ENCODE measurements at regions of chr3 and their contacts with region 1.

Region 1: GRCh38 chr3:27368831-27369607 is at the start of gene NEK10:
- DNase-seq: peak; percentile 91
- total RNA-seq, gene NEK10: 0.51 and 2.9 TPM in 2 replicates

Region 2: DNA sequence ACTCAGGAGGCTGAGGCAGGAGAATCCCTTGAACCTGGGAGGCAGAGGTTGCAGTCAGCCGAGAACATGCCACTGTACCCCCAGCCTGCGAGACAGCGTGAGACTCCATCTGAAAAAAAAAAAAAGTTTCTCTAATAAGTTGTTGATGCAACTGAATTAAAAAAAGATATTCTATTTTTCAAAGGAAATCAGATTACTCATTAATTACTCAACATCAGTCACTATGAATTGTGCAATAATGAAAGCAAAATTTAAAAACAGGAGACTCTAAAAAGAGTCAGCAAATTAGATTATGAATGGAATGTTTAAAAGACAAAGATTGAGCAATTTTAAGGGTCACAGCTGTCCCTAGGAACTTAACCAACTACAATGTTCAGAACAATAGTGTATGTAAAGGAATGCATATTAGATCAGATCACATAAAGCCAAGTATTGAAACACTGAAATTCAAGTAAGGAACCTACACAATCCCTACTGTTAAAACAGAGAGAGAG is 175.4 kb after region 1 on chr3:
- in situ Hi-C with region 1: no loop called
- DNase-seq: no peak

Region 3: GRCh38 chr3:27659279-27660021 is 290.4 kb after region 1 on chr3:
- in situ Hi-C with region 1: loop called (anchors 25 kb)
- DNase-seq: peak; percentile 20

Measured in G401 (cell line).